ENCODE measurements at regions of chr2 and their contacts with region 1.

Region 1: DNA sequence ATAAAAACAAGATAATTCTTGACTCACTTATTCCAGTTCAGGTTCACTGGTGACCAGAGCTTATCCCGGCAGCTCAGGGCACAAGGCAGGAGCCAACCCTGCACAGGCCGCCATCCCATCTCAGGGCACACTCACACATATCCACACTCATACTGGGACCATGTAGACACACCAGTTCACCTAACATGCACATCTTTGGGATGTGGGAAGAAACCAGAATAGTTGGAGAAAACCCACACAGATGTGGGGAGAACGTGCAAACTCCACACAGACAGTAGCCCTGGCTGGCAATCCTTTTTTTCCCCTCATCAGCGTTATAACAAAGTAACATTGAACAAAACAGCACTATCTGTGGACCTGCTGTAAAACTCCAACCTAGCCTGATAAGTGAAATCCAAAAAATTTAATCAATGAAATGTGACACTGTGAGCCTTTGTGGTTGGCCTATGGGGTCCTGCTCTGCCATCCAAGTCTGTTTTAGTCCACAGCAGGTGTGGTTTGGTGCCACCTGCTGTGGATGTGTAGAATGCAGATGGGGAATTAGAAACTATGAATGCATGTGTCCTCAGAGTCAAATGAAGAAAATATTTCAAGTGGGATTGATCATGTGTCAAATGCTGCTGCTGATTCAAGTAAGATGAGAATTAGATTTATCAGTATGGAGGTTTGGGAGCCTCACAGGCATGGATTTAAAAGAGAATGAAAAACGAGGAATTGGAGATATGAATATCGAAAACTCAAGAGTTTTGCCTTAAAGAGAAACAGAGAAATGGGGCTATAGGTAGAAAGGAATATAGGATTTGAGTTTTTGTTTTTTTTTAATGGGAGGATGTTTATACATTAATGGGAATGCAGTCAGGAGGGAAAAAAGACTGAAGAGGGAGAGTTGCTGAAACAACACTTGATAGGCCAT is 47.0 kb downstream of the UGP2 start:
- DNase-seq: peak; percentile 29
- ATAC-seq: peak; percentile 92
- H3K4me3 ChIP-seq: no peak overlapping the region
- H3K27ac ChIP-seq: no peak overlapping the region
- H3K4me1 ChIP-seq: no peaks in the 10 kb centered on the region
- H3K27me3 ChIP-seq: no peaks in the 10 kb centered on the region
- CTCF ChIP-seq: peak; percentile 78 to 91 (median 85)
- POLR2A ChIP-seq: no peak
- RAD21 ChIP-seq: peak; percentile 92

Region 2: DNA sequence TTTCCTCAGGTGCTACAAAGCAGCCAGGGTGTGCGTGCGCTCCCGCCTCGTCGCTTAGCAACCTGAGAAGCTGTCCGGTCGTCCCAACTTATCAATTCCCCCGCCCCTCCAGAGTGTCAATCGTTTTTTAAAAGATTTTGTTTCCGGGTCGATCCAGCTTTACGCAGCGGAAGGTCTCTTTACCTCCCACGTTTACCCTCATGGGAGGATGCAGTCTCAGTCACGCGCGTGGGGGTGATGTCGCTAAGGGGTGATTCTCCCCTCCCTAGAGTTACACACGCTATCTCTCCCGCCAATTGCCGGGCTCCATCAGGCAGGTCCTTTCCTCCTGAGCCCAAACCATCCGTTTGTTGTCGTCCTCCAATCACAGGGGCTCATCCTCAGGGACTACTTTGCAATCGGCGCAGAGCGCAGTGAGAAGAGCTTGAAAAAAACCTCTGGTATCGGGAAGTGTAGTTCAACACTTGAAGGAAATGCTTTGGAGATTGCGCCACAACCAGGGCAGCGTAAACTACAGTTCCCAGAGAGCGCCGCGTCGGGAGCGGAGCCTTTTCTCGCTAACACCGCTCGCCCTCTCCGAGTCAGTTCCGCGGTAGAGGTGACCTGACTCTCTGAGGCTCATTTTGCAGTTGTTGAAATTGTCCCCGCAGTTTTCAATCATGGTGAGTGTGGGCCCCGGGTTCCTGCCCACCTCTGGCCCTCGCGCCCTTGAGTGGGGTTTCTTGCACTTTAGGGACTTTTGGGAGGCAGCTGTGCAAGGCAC is 300.2 kb before region 1 on chr2 and contains the starts of genes MDH1 and WDPCP:
- CTCF ChIA-PET with region 1: no interaction called
- POLR2A ChIA-PET with region 1: no interaction called
- RAD21 ChIA-PET with region 1: no interaction called
- intact Hi-C with region 1: loop called (anchors 10 kb)
- DNase-seq: peak; percentile 100
- ATAC-seq: peak; percentile 91
- H3K4me3 ChIP-seq: peak within 1 kb of the TSS; percentile 71 to 89
- H3K27ac ChIP-seq: peak within 1 kb of the TSS; percentile 70
- H3K4me1 ChIP-seq: peaks cover 10 to 21% of the 10 kb centered on the region in 2 experiments; a peak in 3 of 4 replicates
- H3K27me3 ChIP-seq: no peaks in the 10 kb centered on the region
- CTCF ChIP-seq: no peak
- POLR2A ChIP-seq: peak; percentile 85
- RAD21 ChIP-seq: no peak; the same call in 1 of the 2 replicates
- total RNA-seq, gene MDH1: 192 TPM
- total RNA-seq, gene WDPCP: 4.1 TPM

Region 3: GRCh38 chr2:63692002-63692606 is 196.6 kb before region 1 on chr2:
- CTCF ChIA-PET with region 1: no interaction called
- POLR2A ChIA-PET with region 1: no interaction called
- RAD21 ChIA-PET with region 1: no interaction called
- intact Hi-C with region 1: loop called (anchors 2 kb)
- DNase-seq: peak; percentile 31
- ATAC-seq: peak; percentile 67
- H3K4me3 ChIP-seq: no peak overlapping the region
- H3K27ac ChIP-seq: no peak overlapping the region
- H3K4me1 ChIP-seq: no peaks in the 10 kb centered on the region
- H3K27me3 ChIP-seq: no peaks in the 10 kb centered on the region
- CTCF ChIP-seq: peak; percentile 47 to 61 (median 60); a peak in 5 of 6 replicates
- POLR2A ChIP-seq: no peak
- RAD21 ChIP-seq: peak; percentile 76